CD4-positive, alpha-beta memory T cell (primary cell): ENCODE measurements at regions of chr20 and their contacts with region 1.

Region 1: DNA sequence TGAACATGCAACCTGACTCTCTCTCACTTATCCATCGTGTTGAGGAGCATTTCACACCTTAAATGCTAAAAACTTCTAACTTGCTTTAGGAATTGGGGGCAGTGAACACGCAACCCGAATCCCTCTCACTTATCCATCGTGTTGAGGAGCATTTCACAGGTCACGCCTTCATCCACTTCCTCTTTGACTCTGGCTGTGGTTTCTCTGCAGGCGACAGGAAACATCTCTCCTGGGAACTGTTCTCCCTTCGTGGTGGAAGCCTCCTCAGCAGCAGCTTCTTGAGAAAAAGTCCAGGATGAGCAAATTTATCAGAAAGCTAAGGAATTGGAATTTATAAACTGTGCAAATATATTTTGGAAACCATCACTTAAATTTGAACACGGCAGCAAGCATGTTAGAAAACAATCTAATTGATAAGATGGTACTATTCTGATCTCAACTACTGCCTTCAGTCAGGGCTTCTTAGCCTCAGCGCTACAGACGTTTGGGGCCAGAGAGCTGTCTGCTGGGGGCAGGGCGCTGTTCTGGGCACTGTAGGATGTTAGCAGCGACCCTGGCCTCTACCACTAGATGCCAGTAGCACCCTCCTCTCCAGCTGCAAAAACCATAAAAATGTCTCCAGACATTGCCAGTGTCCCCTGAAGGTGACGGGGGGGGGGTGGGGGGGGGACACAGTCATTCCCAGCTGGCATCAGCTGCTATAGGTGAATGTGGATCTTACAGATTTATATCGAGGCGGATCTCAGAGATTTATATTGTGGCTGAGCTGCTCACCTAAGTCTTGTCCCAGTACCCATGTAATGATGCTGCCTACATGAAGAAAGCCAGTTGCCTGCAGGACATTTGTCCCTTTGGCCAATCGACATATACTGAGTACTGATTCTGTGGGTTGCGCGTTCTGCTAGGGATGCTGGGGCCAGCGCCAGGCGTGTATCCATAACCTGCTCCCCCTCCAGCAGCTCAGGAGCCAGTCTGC is 26.2 kb downstream of the CTCFL start:
- DNase-seq: peak in 3 of 5 donors; percentile 9 to 21 (median 11)
- H3K4me3 ChIP-seq: no peak overlapping the region
- H3K4me3 Mint-ChIP-seq: no peak overlapping the region
- H3K27ac ChIP-seq: no peak overlapping the region
- H3K27ac Mint-ChIP-seq: no peak overlapping the region
- H3K4me1 ChIP-seq: peaks cover 10% of the 10 kb centered on the region
- H3K4me1 Mint-ChIP-seq: peaks cover 10 to 14% (median 11%) of the 10 kb centered on the region in 4 donors
- H3K27me3 ChIP-seq: peaks cover 6% of the 10 kb centered on the region
- H3K27me3 Mint-ChIP-seq: peaks cover 23 to 43% of the 10 kb centered on the region in 2 donors

Region 2: GRCh38 chr20:57089691-57090150 is 409.0 kb before region 1 on chr20:
- CTCF ChIA-PET with region 1: no interaction called
- POLR2A ChIA-PET with region 1: no interaction called
- intact Hi-C with region 1: loop called (anchors 5 kb)
- DNase-seq: peak; percentile 10 to 34 (median 19)
- H3K4me3 ChIP-seq: no peak overlapping the region
- H3K4me3 Mint-ChIP-seq: no peak overlapping the region
- H3K27ac ChIP-seq: no peak overlapping the region
- H3K27ac Mint-ChIP-seq: no peak overlapping the region
- H3K4me1 ChIP-seq: peaks cover 4% of the 10 kb centered on the region
- H3K4me1 Mint-ChIP-seq: peaks cover 6 to 19% (median 10%) of the 10 kb centered on the region in 4 donors
- H3K27me3 ChIP-seq: no peaks in the 10 kb centered on the region
- H3K27me3 Mint-ChIP-seq: peaks cover 6 to 9% of the 10 kb centered on the region in 2 donors

Region 3: DNA sequence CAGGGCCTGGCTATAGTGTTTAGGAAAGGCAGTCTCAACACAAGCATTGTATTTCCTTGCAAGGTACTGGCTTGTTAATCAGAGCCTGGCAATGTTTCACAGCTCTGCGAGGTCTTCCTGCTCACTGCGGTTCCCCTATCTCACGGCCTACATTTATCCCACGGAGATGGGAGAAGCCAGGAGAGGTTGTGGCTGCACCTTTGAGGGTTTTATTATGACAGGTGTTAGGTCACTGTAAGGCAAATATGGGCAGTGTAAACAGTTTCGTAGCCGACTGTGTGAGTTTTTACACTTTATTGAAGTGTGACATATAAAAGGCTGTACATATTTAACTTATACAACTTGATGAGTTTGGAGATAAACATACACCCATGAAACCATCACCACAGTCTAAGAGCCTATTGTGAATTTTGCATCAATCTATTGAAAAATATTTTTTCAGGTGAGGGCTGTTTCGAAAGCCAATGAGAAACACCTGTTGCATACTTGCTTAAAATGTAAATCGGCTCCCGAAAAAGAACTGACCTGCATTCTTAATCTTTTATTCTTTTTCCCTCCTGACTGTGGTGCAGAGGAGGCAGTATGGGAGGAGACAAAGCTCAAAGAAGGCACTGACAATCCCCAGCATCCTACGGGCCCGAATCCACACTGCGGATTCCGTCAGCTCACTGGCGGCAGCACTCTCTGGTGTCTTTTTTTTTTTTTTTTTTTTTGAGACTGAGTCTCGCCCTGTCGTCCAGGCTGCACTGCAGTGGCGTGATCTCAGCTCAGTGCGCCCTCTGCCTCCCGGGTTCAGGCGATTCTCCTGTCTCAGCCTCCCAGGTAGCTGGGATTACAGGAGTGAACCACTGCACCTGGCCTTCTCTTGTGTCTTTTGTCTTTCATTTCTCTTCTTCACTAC is 115.0 kb before region 1 on chr20:
- CTCF ChIA-PET with region 1: interaction called, 48 read pairs
- POLR2A ChIA-PET with region 1: interaction called, 5 read pairs
- intact Hi-C with region 1: loop called (anchors 1 kb)
- DNase-seq: no peak
- H3K4me3 ChIP-seq: no peak overlapping the region
- H3K4me3 Mint-ChIP-seq: no peak overlapping the region
- H3K27ac ChIP-seq: no peak overlapping the region
- H3K27ac Mint-ChIP-seq: peak overlapping the region in 2 of 7 donors; percentile 53 to 63
- H3K4me1 ChIP-seq: peaks cover 18% of the 10 kb centered on the region
- H3K4me1 Mint-ChIP-seq: peaks cover 12 to 27% (median 20%) of the 10 kb centered on the region in 4 donors
- H3K27me3 ChIP-seq: no peaks in the 10 kb centered on the region
- H3K27me3 Mint-ChIP-seq: no peaks in the 10 kb centered on the region

Region 4: DNA sequence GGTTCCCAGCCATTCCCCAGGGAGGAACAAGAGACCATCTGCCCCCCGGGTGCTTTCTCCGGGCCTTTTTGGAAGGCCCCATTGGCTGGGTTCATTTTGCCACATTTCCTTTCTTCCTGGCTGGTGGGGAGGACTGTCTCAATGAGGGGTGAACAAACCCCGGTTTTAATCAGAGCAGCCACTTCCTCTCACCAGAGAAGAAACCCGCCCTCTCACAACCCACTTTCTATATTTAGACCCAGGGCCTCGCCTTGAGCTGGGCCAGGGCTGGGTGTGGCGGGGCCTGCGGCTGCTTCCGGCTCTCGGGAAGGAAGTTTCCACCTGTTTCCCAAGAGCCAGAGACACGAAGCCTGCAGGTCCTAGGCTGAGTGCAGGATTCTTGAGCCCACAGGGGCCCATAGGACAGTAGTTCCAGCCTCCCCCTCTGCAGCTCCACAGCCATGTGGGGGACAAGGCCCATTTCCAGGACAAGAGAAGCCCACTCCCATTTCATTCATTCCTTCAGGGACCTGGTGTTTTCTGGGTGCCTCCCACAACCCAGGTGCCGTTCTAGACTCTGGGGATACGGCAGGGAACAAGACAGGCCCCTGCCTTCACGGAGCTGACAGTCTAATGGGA is 65.7 kb before region 1 on chr20:
- CTCF ChIA-PET with region 1: interaction called, 10 read pairs
- POLR2A ChIA-PET with region 1: no interaction called
- intact Hi-C with region 1: loop called (anchors 2 kb)
- DNase-seq: peak; percentile 72 to 81 (median 77)
- H3K4me3 ChIP-seq: peak overlapping the region in 1 of 2 donors; percentile 44
- H3K4me3 Mint-ChIP-seq: peak overlapping the region; percentile 71 to 89 (median 78)
- H3K27ac ChIP-seq: peak overlapping the region; percentile 43
- H3K27ac Mint-ChIP-seq: peak overlapping the region; percentile 83 to 95 (median 92)
- H3K4me1 ChIP-seq: peaks cover 65% of the 10 kb centered on the region
- H3K4me1 Mint-ChIP-seq: peaks cover 39 to 70% (median 61%) of the 10 kb centered on the region in 4 donors
- H3K27me3 ChIP-seq: no peaks in the 10 kb centered on the region
- H3K27me3 Mint-ChIP-seq: no peaks in the 10 kb centered on the region

Region 5: GRCh38 chr20:57560554-57561355 is 62.0 kb after region 1 on chr20 and contains the start of gene PCK1:
- CTCF ChIA-PET with region 1: no interaction called
- POLR2A ChIA-PET with region 1: no interaction called
- intact Hi-C with region 1: no loop called
- DNase-seq: no peak
- H3K4me3 ChIP-seq: no peak within 1 kb of the TSS
- H3K4me3 Mint-ChIP-seq: no peak within 1 kb of the TSS
- H3K27ac ChIP-seq: no peak within 1 kb of the TSS
- H3K27ac Mint-ChIP-seq: no peak within 1 kb of the TSS
- H3K4me1 ChIP-seq: no peaks in the 10 kb centered on the region
- H3K4me1 Mint-ChIP-seq: no peaks in the 10 kb centered on the region
- H3K27me3 ChIP-seq: no peaks in the 10 kb centered on the region
- H3K27me3 Mint-ChIP-seq: peaks cover 13 to 34% of the 10 kb centered on the region in 2 donors
- total RNA-seq, gene PCK1: not detected